ENCODE measurements at regions of chr11 and their contacts with region 1.

Region 1: DNA sequence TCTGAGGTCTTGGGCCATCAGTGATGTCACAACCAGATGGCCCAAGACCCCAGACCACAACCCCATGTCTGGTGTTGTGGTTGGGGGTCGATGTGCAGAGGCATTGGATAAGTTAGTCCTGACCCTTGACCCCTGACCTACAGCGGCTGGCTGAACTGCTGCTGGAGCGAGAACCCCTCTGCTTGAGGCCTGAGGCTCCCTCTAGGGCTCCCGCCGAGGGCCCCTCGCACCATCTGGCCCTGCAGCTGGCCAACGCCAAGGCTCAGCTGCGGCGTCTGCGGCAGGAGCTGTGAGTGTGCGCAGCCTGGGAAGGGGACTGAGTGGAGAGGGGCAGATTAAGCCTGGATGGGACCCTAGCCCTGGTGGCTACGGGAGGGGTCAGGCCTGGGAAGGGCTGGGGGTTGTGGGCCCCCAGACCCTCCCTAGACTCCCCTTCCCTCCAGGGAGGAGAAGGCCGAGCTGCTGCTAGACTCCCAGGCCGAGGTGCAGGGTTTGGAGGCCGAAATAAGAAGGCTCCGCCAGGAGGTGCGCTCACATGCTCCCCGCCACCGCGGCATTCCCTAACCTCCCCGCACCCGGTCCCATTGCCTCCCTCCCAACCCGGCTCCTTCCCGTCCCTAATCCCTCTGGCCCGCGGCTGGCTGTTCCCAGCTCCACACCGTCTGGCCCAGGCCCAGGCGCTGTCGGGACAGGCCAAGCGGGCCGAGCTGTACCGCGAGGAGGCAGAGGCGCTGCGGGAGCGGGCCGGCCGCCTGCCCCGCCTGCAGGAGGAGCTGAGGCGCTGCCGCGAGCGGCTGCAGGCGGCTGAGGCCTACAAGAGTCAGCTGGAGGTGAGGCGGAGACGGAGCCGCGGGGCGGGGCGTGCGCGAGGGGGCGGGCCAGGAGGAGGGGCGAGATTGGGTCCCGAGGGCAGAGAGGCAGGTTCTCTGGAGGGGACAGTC is 2.1 kb downstream of the CCDC88B start:
- DNase-seq: peak; percentile 95
- H3K4me3 Mint-ChIP-seq: peak overlapping the region; percentile 54
- H3K27ac Mint-ChIP-seq: no peak overlapping the region
- H3K4me1 Mint-ChIP-seq: peaks cover 62% of the 10 kb centered on the region
- H3K27me3 Mint-ChIP-seq: no peaks in the 10 kb centered on the region

Region 2: GRCh38 chr11:64103277-64103985 is 238.7 kb before region 1 on chr11:
- CTCF ChIA-PET with region 1: no interaction called
- POLR2A ChIA-PET with region 1: no interaction called
- DNase-seq: no peak
- H3K4me3 Mint-ChIP-seq: no peak overlapping the region
- H3K27ac Mint-ChIP-seq: no peak overlapping the region
- H3K4me1 Mint-ChIP-seq: no peaks in the 10 kb centered on the region
- H3K27me3 Mint-ChIP-seq: no peaks in the 10 kb centered on the region

Region 3: DNA sequence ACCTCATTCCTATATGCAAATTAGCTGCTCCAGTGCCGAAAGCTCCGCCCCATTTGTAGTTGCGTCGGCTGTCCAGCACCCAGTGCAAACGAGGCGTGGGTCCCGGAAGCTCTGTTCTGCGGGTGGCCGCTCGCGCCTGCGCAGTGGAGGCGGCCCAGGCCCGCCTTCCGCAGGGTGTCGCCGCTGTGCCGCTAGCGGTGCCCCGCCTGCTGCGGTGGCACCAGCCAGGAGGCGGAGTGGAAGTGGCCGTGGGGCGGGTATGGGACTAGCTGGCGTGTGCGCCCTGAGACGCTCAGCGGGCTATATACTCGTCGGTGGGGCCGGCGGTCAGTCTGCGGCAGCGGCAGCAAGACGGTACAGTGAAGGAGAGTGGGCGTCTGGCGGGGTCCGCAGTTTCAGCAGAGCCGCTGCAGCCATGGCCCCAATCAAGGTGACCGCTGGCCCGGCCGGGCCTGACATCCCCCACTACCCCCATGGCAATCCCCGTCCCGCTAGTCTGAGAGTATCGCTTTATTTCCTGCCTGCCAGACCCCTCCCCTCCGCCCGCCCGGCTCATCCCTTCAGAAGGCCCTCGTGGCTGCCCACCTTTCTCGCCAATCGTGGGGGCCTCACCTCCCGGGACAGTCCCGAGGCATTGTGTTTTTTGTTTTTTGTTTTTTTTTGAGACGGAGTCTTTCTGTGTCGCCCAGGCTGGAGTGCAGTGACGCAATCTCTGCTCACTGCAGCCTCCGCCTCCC is 24.0 kb before region 1 on chr11 and contains the start of gene PRDX5:
- CTCF ChIA-PET with region 1: interaction called, 70 read pairs
- POLR2A ChIA-PET with region 1: interaction called, 52 read pairs
- DNase-seq: peak; percentile 96
- H3K4me3 Mint-ChIP-seq: peak within 1 kb of the TSS; percentile 91
- H3K27ac Mint-ChIP-seq: peak within 1 kb of the TSS; percentile 96
- H3K4me1 Mint-ChIP-seq: peaks cover 53% of the 10 kb centered on the region
- H3K27me3 Mint-ChIP-seq: no peaks in the 10 kb centered on the region
- total RNA-seq, gene PRDX5: 137 to 139 TPM

Region 4: DNA sequence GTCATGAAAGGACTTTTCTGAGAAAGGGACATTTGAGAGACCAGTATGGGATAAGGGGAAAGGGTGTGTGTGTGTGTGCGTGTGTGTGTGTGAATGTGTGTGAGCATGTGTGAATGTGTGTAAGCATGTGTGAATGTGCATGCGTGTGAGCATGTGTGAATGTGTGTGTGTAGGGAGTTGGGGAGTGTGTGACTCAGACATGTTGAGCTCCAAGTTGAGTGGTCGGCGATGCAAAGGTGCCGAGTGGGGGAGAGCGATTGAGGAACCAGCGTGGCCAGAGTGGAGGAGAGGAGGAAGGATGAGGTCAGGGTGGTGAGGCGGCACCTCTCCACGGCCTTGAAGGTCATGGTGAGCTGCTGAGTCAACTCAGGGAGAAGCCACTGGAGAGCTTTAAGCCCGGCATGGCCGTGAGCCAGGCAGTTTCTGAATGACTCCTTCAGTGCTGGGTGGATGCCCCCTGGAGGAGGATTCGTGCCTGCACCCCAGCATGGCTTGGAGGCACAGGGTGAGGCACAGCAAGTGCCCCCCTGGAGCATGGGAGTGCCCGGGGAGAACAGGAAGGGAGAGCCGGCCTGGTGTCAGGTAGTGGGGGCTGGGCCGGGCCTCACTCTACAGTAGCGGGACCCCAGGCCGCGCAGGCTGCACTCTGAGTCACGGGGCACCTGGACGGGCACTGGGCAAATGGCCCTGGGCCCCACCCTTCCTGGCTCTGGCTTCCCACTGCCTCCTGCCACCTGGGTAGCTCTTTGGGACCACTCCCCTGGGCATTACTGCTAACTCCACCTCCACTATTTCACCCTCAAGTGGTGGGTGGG is 10.4 kb before region 1 on chr11:
- CTCF ChIA-PET with region 1: interaction called, 41 read pairs
- POLR2A ChIA-PET with region 1: interaction called, 23 read pairs
- DNase-seq: peak; percentile 89
- H3K4me3 Mint-ChIP-seq: peak overlapping the region; percentile 45
- H3K27ac Mint-ChIP-seq: peak overlapping the region; percentile 83
- H3K4me1 Mint-ChIP-seq: peaks cover 44% of the 10 kb centered on the region
- H3K27me3 Mint-ChIP-seq: no peaks in the 10 kb centered on the region

Region 5: DNA sequence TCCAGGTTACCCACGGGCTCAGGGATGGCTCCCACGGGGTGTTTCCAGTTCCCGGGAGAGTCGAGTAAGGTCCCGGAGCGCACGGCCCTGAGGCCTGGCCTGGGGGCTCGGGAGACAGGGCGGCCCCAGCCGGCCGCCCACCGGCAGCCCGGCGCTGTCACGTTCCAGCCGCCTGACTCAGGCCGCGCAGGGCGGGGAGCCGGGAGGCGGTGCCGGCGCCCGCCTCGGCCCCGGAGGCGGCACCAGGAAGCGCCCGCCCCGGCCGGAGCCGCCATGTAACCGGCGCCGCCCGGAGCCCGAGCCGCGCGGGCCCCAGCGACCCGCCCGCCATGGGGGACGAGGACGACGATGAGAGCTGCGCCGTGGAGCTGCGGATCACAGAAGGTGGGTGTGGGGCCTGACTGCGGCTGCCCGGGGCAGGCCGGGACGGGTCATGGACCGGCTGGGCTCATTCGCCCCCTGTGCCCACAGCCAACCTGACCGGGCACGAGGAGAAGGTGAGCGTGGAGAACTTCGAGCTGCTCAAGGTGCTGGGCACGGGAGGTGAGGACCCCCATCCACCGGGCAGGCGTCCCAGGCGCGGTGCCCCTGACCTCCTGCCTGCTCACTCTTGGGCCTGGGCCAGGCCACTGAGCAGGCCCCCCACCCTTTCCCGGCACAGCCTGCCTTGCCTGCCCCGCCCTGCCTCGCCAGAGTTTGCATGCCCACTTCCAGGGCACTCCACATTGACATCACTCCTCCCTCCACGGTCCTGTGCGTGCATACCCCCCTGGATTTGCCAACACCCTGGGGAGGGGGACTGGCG is 17.0 kb after region 1 on chr11 and contains the start of gene RPS6KA4:
- CTCF ChIA-PET with region 1: interaction called, 16 read pairs
- POLR2A ChIA-PET with region 1: interaction called, 13 read pairs
- DNase-seq: peak; percentile 65
- H3K4me3 Mint-ChIP-seq: peak within 1 kb of the TSS; percentile 92
- H3K27ac Mint-ChIP-seq: peak within 1 kb of the TSS; percentile 89
- H3K4me1 Mint-ChIP-seq: peaks cover 40% of the 10 kb centered on the region
- H3K27me3 Mint-ChIP-seq: no peaks in the 10 kb centered on the region
- total RNA-seq, gene RPS6KA4: 40.2 to 43.5 TPM

Region 6: DNA sequence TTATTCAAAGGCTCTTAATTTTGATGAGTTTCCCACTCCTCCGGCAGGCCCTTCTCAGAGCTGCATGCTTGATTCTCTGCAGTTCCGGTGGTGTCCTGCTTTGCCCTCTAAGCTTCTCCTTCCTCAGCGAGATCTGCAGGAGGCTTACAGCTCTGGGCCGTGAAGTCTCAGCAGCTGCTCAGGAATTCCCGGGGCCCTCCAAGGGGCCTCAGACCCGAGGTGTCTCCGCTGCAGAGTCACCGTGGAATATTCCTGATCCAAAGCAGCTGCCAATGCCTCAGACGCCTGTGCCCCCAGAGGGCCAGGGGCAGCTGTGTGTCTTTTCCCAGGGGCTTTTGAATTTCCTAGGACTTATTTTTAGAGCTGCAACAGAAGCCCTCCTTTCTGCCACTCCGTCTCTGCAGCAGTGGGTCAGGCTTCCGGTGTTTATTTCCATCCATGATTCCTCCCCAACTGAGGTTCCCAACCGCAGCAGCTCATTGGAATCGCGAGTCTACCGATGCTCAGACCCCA is 54.0 kb after region 1 on chr11:
- CTCF ChIA-PET with region 1: no interaction called
- POLR2A ChIA-PET with region 1: no interaction called
- DNase-seq: no peak
- H3K4me3 Mint-ChIP-seq: no peak overlapping the region
- H3K27ac Mint-ChIP-seq: no peak overlapping the region
- H3K4me1 Mint-ChIP-seq: peaks cover 6% of the 10 kb centered on the region
- H3K27me3 Mint-ChIP-seq: peaks cover 3% of the 10 kb centered on the region

Measured in activated CD4-positive, alpha-beta memory T cell treated with anti-CD3 and anti-CD28 coated beads, Interleukin-2, amount 10 ng/mL, durations not matched to agents 7 days and 5 days (primary cell).